ENCODE measurements at regions of chr9 and their contacts with region 1.

Region 1: DNA sequence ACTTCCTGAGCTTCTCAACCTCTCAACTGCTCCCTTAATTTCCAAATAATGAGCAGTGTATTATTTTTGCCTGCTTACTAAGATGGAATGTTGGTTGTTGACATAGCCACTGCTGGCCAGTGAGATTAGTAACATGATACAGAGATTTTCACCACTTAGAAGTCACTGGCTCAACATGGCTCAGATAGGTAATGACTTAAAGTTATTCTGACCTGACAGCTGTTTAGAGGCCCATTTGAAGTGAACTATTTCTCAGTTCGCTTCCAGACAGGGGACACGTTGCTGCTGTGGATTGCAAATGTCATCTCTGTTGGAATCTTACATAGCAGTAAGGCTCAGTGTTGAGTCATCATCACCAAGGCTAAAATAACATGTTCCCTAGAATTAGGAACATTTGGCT is 490.2 kb downstream of the TLE4 start:
- DNase-seq: no peak
- H3K4me3 ChIP-seq: no peak overlapping the region
- H3K27ac ChIP-seq: no peak overlapping the region
- H3K4me1 ChIP-seq: no peaks in the 10 kb centered on the region
- H3K27me3 ChIP-seq: no peaks in the 10 kb centered on the region
- CTCF ChIP-seq: no peak
- POLR2A ChIP-seq: no peak

Region 2: DNA sequence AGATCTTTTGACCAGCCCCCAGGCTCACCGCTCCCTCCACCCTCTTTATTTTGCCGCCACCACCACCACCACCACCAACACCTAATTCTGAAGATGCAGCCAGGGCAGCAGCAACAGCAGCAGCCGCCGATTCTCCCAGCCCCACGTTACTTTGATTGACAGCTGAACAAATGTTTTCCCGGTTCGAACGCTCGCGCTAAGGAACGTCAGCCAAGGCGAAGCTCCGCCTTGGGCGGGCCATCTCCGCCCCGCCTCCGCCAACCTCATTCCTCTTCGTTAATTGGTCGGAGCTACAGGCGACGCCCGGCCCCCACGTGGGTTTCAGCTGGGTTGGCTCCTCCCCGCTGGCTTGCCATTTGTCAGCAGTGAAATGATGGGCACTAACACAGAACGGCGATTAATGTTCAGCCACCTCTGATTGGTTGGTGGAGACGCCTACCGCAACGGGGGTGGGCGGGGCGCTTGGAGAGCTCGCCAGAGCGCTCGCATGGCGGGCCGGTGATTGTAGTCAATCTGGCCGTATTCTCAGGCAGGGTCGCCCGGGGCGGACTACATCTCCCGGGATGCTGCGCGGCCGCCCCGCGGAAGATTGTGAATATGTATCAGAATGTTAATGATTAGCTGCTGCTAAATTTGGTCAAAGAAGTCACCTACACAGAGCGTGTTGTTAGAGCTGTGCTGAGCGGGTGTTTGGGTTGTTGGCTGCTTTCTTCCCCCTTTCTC is 490.5 kb before region 1 on chr9 and contains the start of gene TLE4:
- intact Hi-C with region 1: loop called (anchors 10 kb)
- DNase-seq: peak; percentile 100
- H3K4me3 ChIP-seq: peak within 1 kb of the TSS; percentile 75 to 82
- H3K27ac ChIP-seq: peak within 1 kb of the TSS; percentile 85 to 87
- H3K4me1 ChIP-seq: no peaks in the 10 kb centered on the region
- H3K27me3 ChIP-seq: no peaks in the 10 kb centered on the region
- CTCF ChIP-seq: no peak
- POLR2A ChIP-seq: peak; percentile 96
- total RNA-seq, gene TLE4: 9.7 to 130 TPM

Region 3: DNA sequence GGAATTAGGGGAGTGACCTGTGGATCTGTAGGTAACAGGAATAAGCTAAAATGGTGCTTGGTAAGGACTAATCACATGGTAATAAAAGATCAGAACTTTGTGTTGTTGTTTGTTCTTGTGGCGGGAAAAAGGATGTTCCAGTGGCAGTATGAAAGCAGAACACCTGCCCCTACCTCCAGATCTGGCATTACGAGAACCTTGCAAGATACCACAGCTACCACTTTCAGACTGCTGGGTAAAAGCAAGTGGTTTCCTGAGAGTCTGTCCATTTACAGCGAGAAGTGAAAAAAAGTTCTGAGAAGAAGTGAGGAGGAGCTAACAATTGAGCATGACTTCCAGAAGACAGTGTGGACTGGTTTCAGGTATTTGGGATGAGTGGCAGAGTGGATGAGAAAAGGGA is 237.7 kb before region 1 on chr9:
- intact Hi-C with region 1: no loop called
- DNase-seq: no peak
- H3K4me3 ChIP-seq: no peak overlapping the region
- H3K27ac ChIP-seq: no peak overlapping the region
- H3K4me1 ChIP-seq: no peaks in the 10 kb centered on the region
- H3K27me3 ChIP-seq: no peaks in the 10 kb centered on the region
- CTCF ChIP-seq: no peak
- POLR2A ChIP-seq: no peak

Region 4: GRCh38 chr9:79917421-79917820 is 144.5 kb before region 1 on chr9:
- intact Hi-C with region 1: no loop called
- DNase-seq: no peak
- H3K4me3 ChIP-seq: no peak overlapping the region
- H3K27ac ChIP-seq: no peak overlapping the region
- H3K4me1 ChIP-seq: no peaks in the 10 kb centered on the region
- H3K27me3 ChIP-seq: no peaks in the 10 kb centered on the region
- CTCF ChIP-seq: no peak
- POLR2A ChIP-seq: no peak

Region 5: GRCh38 chr9:80020530-80020929 is 41.4 kb before region 1 on chr9:
- intact Hi-C with region 1: no loop called
- DNase-seq: no peak
- H3K4me3 ChIP-seq: no peak overlapping the region
- H3K27ac ChIP-seq: no peak overlapping the region
- H3K4me1 ChIP-seq: no peaks in the 10 kb centered on the region
- H3K27me3 ChIP-seq: no peaks in the 10 kb centered on the region
- CTCF ChIP-seq: no peak
- POLR2A ChIP-seq: no peak